AG04449 (cell line): ENCODE measurements at regions of chr11 and their contacts with region 1.

Region 1: GRCh38 chr11:75867775-75868374 is 52.9 kb downstream of the UVRAG start:
- DNase-seq: no peak
- H3K4me3 ChIP-seq: no peak overlapping the region
- CTCF ChIP-seq: peak; percentile 41

Region 2: DNA sequence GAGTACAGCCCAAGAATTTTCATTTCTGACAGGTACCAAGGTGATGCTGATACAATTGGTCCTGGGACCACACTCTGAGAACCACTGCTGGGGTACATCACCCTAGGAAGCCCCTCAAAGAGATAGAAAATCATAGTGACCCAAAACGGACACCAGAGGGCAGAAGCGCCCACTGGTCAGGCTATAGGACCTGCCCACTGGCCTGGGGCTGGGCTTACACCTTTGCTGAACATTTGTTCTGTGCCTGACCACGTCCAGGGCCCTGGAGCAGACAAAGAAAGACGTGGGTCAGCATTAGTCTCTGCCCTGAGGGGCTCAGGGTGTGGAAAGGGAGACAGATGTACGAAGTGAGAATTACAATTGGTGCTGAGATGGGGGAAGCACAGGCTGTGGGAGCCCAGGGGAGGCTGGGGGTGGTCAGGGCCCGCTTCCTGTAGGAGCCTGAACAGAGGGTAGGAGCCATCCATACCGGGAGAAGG is 320.3 kb before region 1 on chr11:
- CTCF ChIA-PET with region 1: interaction called, 14 read pairs
- POLR2A ChIA-PET with region 1: no interaction called
- DNase-seq: no peak
- H3K4me3 ChIP-seq: no peak overlapping the region
- CTCF ChIP-seq: peak; percentile 72

Region 3: GRCh38 chr11:75697906-75698563 is 169.8 kb before region 1 on chr11:
- CTCF ChIA-PET with region 1: no interaction called
- POLR2A ChIA-PET with region 1: no interaction called
- DNase-seq: no peak
- H3K4me3 ChIP-seq: no peak overlapping the region
- CTCF ChIP-seq: no peak

Region 4: DNA sequence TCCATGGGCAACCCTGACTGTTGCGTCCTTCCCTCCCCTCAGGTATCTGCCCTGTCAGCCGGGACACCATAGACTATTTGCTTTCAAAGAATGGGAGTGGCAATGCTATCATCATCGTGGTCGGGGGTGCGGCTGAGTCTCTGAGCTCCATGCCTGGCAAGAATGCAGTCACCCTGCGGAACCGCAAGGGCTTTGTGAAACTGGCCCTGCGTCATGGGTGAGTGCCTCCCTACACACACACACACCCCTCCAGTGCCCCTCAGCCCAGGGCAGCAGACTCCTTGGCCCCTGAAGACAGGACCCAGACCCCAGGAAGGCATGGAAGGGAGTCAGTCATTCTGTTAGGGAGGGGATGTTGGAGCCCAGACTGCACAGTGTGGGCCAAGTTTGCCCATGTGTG is 70.8 kb before region 1 on chr11:
- CTCF ChIA-PET with region 1: interaction called, 181 read pairs
- POLR2A ChIA-PET with region 1: no interaction called
- DNase-seq: no peak
- H3K4me3 ChIP-seq: no peak overlapping the region
- CTCF ChIP-seq: no peak

Region 5: GRCh38 chr11:75814686-75815344 is 53.1 kb before region 1 on chr11 and contains the start of gene UVRAG:
- CTCF ChIA-PET with region 1: interaction called, 67 read pairs
- POLR2A ChIA-PET with region 1: interaction called, 3 read pairs
- DNase-seq: peak; percentile 98
- H3K4me3 ChIP-seq: peak within 1 kb of the TSS; percentile 79
- CTCF ChIP-seq: no peak

Region 6: GRCh38 chr11:75855191-75855590 is 12.7 kb before region 1 on chr11:
- CTCF ChIA-PET with region 1: interaction called, 14 read pairs
- POLR2A ChIA-PET with region 1: no interaction called
- DNase-seq: no peak
- H3K4me3 ChIP-seq: no peak overlapping the region
- CTCF ChIP-seq: no peak

Region 7: DNA sequence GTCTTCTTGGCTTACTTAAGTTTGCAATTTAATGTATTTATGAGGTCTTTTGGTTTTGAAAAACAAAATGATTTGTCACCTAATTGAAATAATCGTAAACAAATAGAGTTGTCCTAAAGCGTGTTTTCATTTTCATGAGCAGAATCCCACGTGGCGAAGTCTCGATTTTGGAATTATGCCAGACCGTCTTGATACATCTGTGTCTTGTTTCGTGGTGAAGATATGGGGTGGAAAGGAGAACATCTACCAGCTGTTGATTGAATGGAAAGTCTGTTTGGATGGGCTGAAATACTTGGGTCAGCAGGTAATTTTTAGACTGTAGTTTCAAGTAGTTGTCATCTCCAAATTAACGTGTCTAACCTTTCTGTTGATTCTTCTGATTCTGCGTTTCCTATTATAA is 11.9 kb after region 1 on chr11:
- CTCF ChIA-PET with region 1: interaction called, 21 read pairs
- POLR2A ChIA-PET with region 1: no interaction called
- DNase-seq: no peak
- H3K4me3 ChIP-seq: no peak overlapping the region
- CTCF ChIP-seq: no peak

Region 8: DNA sequence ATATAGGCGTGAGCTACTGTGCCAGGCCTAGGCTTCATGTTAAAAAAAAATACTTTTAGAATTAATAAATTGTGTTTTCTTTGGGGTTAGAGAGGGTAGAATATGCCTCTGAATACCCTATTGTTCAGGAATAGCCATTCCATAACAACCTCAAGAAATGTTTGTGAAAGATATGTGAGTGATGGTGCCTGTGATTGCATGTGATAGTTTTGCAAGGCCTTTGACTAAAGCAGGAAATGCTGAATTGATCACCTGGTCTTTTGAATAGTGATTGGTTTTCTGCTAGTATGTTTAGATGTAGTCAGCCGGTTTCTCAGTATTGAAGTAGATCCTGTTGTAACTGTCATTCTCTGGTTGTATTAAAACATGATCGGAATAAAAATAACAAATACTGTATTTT is 20.5 kb after region 1 on chr11:
- CTCF ChIA-PET with region 1: interaction called, 10 read pairs
- POLR2A ChIA-PET with region 1: no interaction called
- DNase-seq: no peak
- H3K4me3 ChIP-seq: no peak overlapping the region
- CTCF ChIP-seq: no peak